Mammary epithelial cell (primary cell): ENCODE measurements at regions of chr12 and their contacts with region 1.

Region 1: DNA sequence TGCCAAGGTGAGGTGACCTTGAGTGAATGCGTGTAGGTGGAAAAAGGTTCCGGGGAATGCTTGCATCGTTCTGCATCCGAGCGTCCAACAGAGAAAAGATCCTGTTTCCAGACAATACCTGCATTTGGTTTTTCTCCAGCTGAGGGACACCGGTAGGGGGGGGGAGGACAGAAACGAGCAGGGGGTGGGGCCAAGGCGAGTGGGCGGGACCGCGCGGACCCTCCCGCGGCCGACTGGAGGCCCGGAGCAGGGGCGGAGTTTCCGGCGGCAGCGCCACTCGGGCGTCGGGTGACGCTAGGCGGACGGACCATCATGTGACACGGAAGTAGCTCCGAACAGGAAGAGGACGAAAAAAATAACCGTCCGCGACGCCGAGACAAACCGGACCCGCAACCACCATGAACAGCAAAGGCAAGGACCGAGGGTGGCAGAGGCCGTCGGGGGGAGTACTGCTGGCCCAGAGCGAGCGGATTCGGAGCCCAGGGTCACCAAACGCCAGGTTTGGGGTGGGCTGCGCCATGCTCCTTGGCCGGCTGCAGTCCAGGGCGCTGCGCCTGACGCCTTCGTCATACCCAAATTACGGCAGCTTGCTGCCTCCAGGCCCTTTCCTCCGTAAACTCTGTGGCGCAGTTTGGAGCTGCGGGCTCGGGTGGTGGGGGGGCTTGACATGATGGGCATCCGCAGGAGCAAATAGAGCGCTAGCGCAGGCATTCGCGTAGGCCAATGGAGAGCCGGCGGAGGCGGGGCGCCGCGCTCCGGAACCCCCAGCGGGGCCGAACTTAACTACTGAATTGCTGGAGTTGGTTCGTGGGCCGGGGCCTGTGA is at the start of gene DAZAP2:
- DNase-seq: peak; percentile 93
- H3K4me3 ChIP-seq: peak within 1 kb of the TSS; percentile 88 to 100 (median 98)
- H3K27ac ChIP-seq: peak within 1 kb of the TSS; percentile 98
- H3K4me1 ChIP-seq: peaks cover 21% of the 10 kb centered on the region
- H3K27me3 ChIP-seq: no peaks in the 10 kb centered on the region
- CTCF ChIP-seq: peak; percentile 7 to 41
- total RNA-seq, gene DAZAP2: 90.7 to 138 TPM

Region 2: DNA sequence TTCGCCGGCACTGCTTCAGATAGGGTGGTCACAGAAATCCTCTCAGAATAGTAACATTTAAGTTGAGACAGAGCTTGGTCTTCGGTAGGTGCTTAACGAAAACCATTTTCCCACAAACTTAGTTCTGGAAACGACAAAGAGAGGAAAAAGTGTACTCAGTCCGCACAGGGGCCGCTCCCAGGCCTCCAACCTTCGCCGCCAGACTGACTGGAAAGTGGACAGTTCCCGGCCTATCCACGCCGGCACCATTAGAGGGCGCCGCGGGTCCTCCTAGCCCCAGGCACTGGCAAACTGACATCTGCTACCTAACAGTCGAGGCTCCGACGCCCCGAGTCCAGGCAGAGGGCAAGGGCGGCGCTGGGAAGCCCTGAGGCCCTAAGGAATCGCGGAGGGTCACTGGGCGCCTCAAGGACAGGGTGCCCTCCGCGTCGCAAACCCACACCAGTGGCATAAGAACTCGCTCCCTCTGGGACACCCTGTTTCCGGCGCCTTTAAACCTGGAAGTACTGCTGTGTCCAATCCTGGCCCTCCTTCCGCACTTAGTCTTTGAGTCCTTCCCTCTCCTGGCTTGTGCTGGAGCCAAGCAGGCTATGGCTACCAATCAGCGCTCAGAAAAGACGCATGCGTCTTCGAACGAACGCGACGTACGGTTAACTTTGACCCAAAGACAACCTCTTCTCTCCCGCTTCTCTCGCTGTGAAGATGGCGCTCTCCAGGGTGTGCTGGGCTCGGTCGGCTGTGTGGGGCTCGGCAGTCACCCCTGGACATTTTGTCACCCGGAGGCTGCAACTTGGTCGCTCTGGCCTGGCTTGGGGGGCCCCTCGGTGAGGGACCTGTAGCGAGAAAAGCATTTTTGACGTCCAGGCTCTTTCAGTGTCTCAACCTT is 190.8 kb before region 1 on chr12 and contains the start of gene LETMD1:
- CTCF ChIA-PET with region 1: no interaction called
- dilution Hi-C with region 1: loop called (anchors 25 kb)
- in situ Hi-C with region 1: no loop called
- intact Hi-C with region 1: loop called (anchors 1 kb)
- DNase-seq: peak; percentile 98
- H3K4me3 ChIP-seq: peak within 1 kb of the TSS; percentile 79 to 90 (median 80)
- H3K27ac ChIP-seq: peak within 1 kb of the TSS; percentile 53
- H3K4me1 ChIP-seq: peaks cover 9% of the 10 kb centered on the region
- H3K27me3 ChIP-seq: no peaks in the 10 kb centered on the region
- CTCF ChIP-seq: peak; percentile 88 to 96
- total RNA-seq, gene LETMD1: 40.8 to 54.9 TPM

Region 3: GRCh38 chr12:51083126-51083833 is 155.4 kb before region 1 on chr12 and contains the start of gene CSRNP2:
- CTCF ChIA-PET with region 1: no interaction called
- dilution Hi-C with region 1: no loop called
- in situ Hi-C with region 1: no loop called
- intact Hi-C with region 1: loop called (anchors 1 kb)
- DNase-seq: peak; percentile 92
- H3K4me3 ChIP-seq: peak within 1 kb of the TSS; percentile 86 to 94 (median 91)
- H3K27ac ChIP-seq: peak within 1 kb of the TSS; percentile 52
- H3K4me1 ChIP-seq: peaks cover 8% of the 10 kb centered on the region
- H3K27me3 ChIP-seq: no peaks in the 10 kb centered on the region
- CTCF ChIP-seq: no peak
- total RNA-seq, gene CSRNP2: 40.1 to 53.3 TPM

Region 4: GRCh38 chr12:51172515-51173431 is 65.9 kb before region 1 on chr12 and contains the start of gene TFCP2:
- CTCF ChIA-PET with region 1: no interaction called
- dilution Hi-C with region 1: no loop called
- in situ Hi-C with region 1: no loop called
- intact Hi-C with region 1: loop called (anchors 2 kb)
- DNase-seq: peak; percentile 93
- H3K4me3 ChIP-seq: peak within 1 kb of the TSS; percentile 67 to 80 (median 74)
- H3K27ac ChIP-seq: peak within 1 kb of the TSS; percentile 93
- H3K4me1 ChIP-seq: no peaks in the 10 kb centered on the region
- H3K27me3 ChIP-seq: no peaks in the 10 kb centered on the region
- CTCF ChIP-seq: no peak
- total RNA-seq, gene TFCP2: 12.0 to 32.7 TPM

Region 5: GRCh38 chr12:51341259-51342007 is 102.7 kb after region 1 on chr12:
- CTCF ChIA-PET with region 1: no interaction called
- dilution Hi-C with region 1: no loop called
- in situ Hi-C with region 1: no loop called
- intact Hi-C with region 1: loop called (anchors 1 kb)
- DNase-seq: peak; percentile 48
- H3K4me3 ChIP-seq: no peak overlapping the region
- H3K27ac ChIP-seq: no peak overlapping the region
- H3K4me1 ChIP-seq: peaks cover 2% of the 10 kb centered on the region
- H3K27me3 ChIP-seq: no peaks in the 10 kb centered on the region
- CTCF ChIP-seq: peak; percentile 99 to 100